Caco-2 (cell line): ENCODE measurements at regions of chr9 and their contacts with region 1.

Region 1: GRCh38 chr9:96071076-96071814 is 195.8 kb downstream of the ERCC6L2 start:
- DNase-seq: peak; percentile 53 to 54
- H3K4me3 ChIP-seq: no peak overlapping the region
- H3K4me3 Mint-ChIP-seq: no peak overlapping the region
- H3K27ac Mint-ChIP-seq: peak overlapping the region; percentile 26
- H3K4me1 ChIP-seq: peaks cover 31% of the 10 kb centered on the region
- H3K4me1 Mint-ChIP-seq: peaks cover 19% of the 10 kb centered on the region
- H3K27me3 ChIP-seq: no peaks in the 10 kb centered on the region
- H3K27me3 Mint-ChIP-seq: no peaks in the 10 kb centered on the region
- CTCF ChIP-seq: peak; percentile 51 to 63

Region 2: DNA sequence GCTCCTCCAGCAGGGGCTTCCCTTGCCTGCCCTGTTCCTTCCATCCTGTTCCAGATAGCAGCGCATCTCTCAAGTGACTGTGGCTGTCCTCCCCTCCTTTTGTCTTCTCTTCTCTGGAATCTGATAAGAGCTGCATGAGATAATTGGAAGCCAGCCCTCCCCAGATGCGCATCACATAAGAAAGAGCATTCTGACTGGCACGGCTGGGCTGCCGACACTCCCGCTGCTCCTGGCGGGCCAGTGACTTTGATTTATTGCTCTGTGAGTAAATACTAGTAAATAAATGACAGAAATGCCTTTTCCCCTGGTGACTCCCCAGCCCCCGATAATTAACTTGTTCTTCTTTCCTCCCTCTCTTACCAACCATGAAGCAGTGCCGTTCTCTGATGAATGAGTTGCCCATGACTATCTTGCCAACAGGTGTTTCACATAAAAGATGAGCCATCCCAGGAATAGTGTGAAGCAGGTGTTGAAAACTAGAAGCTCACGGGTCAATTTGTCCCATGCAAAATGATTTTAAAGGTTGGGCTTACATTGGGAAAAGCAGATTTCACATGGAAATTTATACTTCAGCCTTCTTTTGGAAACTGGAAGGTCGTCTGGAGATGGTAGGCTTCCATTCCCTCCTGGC is 16.5 kb after region 1 on chr9:
- CTCF ChIA-PET with region 1: interaction called, 5 read pairs
- POLR2A ChIA-PET with region 1: no interaction called
- intact Hi-C with region 1: loop called (anchors 2 kb)
- DNase-seq: peak; percentile 73 to 90
- H3K4me3 ChIP-seq: peak overlapping the region; percentile 29
- H3K4me3 Mint-ChIP-seq: peak overlapping the region; percentile 52
- H3K27ac Mint-ChIP-seq: peak overlapping the region; percentile 4
- H3K4me1 ChIP-seq: peaks cover 44% of the 10 kb centered on the region
- H3K4me1 Mint-ChIP-seq: peaks cover 29% of the 10 kb centered on the region
- H3K27me3 ChIP-seq: no peaks in the 10 kb centered on the region
- H3K27me3 Mint-ChIP-seq: no peaks in the 10 kb centered on the region
- CTCF ChIP-seq: no peak

Region 3: GRCh38 chr9:96177005-96177718 is 105.9 kb after region 1 on chr9:
- CTCF ChIA-PET with region 1: no interaction called
- POLR2A ChIA-PET with region 1: no interaction called
- intact Hi-C with region 1: loop called (anchors 5 kb)
- DNase-seq: peak; percentile 42 to 51
- H3K4me3 ChIP-seq: no peak overlapping the region
- H3K4me3 Mint-ChIP-seq: no peak overlapping the region
- H3K27ac Mint-ChIP-seq: no peak overlapping the region
- H3K4me1 ChIP-seq: peaks cover 47% of the 10 kb centered on the region
- H3K4me1 Mint-ChIP-seq: peaks cover 15% of the 10 kb centered on the region
- H3K27me3 ChIP-seq: no peaks in the 10 kb centered on the region
- H3K27me3 Mint-ChIP-seq: no peaks in the 10 kb centered on the region
- CTCF ChIP-seq: peak in 1 of 2 experiments; percentile 17